ENCODE measurements at regions of chr2 and their contacts with region 1.

Region 1: DNA sequence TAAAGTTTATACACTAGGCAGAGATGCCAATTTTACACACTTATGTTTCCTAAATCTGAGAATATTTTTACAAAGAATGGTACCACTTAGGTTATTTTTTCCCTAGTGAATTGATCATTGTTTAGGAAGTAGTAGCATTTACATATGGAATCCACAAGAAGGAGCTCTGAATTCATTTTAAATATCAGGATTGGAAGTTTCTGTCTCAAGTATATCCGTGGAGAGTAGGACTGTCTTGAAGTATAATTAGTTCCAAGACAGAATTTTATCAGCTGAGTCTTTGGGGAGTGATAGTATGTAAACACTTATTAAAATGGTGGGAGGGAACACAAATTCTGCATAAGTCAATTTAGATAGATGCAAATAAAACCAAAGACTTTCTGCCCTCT is 82.3 kb upstream of the FAM98A start:
- DNase-seq: no peak
- H3K4me3 ChIP-seq: no peak overlapping the region
- H3K4me1 ChIP-seq: no peaks in the 10 kb centered on the region
- H3K27me3 ChIP-seq: peaks cover 6% of the 10 kb centered on the region

Region 2: GRCh38 chr2:34096562-34097171 is 415.3 kb after region 1 on chr2:
- in situ Hi-C with region 1: loop called (anchors 25 kb)
- DNase-seq: peak; percentile 35 to 70
- H3K4me3 ChIP-seq: no peak overlapping the region
- H3K4me1 ChIP-seq: no peaks in the 10 kb centered on the region
- H3K27me3 ChIP-seq: no peaks in the 10 kb centered on the region

Measured in HAP-1 (cell line).